ENCODE measurements at regions of chr16 and their contacts with region 1.

Region 1: DNA sequence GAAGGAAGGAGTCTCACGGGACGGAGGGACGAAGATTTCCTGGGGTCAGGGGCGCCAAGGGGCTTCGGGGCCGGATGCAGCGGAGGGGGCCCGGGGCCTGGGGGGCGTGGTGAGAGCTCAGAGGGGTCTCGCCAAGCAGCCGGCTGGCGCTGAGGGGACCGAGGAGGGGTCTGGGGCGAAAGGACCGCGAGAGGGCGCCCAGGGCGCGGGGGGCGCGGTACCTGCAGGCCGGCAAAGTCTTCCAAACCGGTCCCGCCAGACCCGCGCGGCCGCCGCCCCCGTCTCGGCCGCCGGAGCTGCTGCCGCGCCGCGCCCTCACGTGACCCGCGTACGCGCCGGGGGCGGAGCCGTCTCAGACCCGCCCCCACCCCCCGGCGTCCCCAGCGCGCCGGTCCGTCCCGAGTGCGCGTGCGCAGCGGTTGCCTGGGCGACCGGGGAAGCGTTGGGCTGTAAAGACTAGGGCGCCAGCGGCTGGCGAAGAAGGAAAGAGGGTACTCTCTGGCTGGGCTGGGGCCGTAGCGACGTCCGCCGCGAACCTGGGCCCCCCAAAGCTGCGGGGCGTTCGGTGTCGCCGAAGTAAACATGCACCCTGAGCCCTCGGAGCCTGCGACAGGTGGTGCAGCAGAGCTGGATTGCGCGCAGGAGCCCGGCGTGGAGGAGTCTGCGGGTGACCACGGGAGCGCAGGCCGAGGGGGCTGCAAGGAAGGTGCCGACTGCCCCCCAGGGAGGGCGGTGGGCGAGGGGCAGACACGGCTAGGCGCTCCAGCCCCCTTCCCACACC is at the starts of genes DNAAF1 and HSDL1:
- DNase-seq: peak; percentile 97
- H3K4me3 Mint-ChIP-seq: peak within 1 kb of the TSS; percentile 95
- H3K27ac Mint-ChIP-seq: peak within 1 kb of the TSS; percentile 87
- H3K4me1 Mint-ChIP-seq: no peaks in the 10 kb centered on the region
- H3K27me3 Mint-ChIP-seq: no peaks in the 10 kb centered on the region
- CTCF ChIP-seq: peak; percentile 72
- total RNA-seq, gene DNAAF1: 0.32 TPM in 1 of 2 replicates, not detected in the other
- total RNA-seq, gene HSDL1: 20.8 and 23.0 TPM in 2 replicates

Region 2: GRCh38 chr16:84175350-84176081 is 30.5 kb after region 1 on chr16:
- CTCF ChIA-PET with region 1: no interaction called
- intact Hi-C with region 1: loop called (anchors 1 kb)
- DNase-seq: peak; percentile 88
- H3K4me3 Mint-ChIP-seq: no peak overlapping the region
- H3K27ac Mint-ChIP-seq: peak overlapping the region; percentile 45
- H3K4me1 Mint-ChIP-seq: peaks cover 9% of the 10 kb centered on the region
- H3K27me3 Mint-ChIP-seq: no peaks in the 10 kb centered on the region
- CTCF ChIP-seq: peak; percentile 93

Region 3: GRCh38 chr16:84647828-84648594 is 503.0 kb after region 1 on chr16 and contains the start of gene KLHL36:
- CTCF ChIA-PET with region 1: no interaction called
- intact Hi-C with region 1: no loop called
- DNase-seq: peak; percentile 79
- H3K4me3 Mint-ChIP-seq: peak within 1 kb of the TSS; percentile 87
- H3K27ac Mint-ChIP-seq: peak within 1 kb of the TSS; percentile 94
- H3K4me1 Mint-ChIP-seq: peaks cover 30% of the 10 kb centered on the region
- H3K27me3 Mint-ChIP-seq: peaks cover 28% of the 10 kb centered on the region
- CTCF ChIP-seq: no peak
- total RNA-seq, gene KLHL36: 90.4 and 93.6 TPM in 2 replicates

Measured in Calu3 (cell line).